Cardiac septum (tissue), 1 donor: ENCODE measurements at regions of chr3 and their contacts with region 1.

Region 1: GRCh38 chr3:109023656-109024254 is 70.1 kb upstream of the GUCA1C start:
- DNase-seq: no peak

Region 2: DNA sequence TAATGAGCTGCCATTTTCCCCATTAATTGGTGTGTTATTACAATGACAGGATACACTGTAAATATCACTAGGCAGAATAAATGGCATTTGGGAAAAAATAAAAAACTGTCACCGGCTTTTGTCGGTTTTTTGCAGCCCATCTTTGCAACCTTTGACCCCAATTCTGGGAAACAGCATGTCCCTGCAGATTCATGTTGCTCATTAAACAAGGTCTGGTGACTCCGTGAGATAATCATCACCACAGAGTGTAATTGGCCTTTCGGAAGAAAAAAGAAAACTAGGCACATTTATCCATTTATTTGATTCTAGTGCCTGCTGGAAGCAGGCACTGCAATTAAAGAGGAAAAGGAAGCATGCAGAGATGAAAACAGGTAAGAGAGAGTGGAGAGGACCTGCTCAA is 136.6 kb before region 1 on chr3:
- intact Hi-C with region 1: no loop called
- DNase-seq: no peak

Region 3: DNA sequence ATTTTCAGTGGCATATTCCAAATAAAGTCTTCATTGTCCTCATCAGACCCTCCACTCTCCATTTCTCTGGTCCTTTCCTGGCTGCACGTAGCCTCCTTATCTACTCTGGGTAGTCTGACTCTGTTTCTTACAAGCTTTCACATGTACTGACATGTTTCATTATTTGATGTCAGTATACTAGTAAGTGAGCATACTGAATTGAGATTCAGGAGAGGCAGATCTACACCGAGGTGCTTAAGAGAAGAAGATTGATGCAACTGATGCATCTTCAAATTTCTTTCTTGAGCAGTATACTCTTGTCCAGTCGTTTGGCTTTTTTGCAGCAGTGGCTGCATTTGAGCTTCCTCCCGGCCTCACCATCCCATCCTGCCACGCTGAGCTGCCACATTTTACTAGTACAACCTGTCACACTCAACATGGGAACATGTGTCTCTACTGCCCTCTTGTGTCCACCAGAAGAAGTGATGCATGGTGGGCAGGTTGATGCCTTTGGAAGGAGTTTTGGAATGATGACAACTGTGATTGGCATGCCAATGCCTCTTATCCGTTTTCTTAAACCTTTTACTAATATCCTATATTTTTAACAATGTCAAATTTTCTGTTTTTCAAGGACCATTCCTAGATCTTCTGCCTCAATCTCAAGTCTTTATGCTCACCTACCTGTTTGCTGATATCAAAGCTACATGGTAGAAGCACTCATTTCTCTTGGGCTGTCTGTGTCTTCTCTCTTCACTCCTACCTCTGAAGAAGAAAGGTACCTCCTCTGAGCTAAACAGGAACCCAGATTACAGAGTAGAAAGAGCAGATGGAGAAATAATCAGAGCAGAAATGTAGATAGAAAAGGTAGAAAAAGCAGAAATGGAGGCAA is 108.7 kb before region 1 on chr3:
- intact Hi-C with region 1: no loop called
- DNase-seq: no peak

Region 4: DNA sequence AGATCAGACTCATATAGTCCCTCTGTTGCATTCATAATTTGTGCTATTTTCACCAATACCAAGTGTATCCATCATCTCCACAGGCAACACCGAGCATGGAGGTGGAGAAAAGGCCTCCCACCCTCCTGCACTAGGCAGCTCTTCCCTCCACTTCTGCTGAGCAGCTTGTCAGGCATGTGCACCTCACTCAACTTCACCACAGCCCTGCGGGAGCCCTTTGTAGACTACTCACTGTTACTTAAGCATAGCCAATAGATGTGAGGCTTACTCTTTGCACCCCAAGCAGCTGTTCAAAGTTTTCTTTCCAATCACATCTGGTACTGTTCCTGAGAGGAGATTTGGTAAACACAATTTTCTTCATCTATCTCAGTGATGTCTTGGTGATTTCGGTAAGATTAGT is 53.2 kb before region 1 on chr3:
- intact Hi-C with region 1: no loop called
- DNase-seq: no peak

Region 5: GRCh38 chr3:109071350-109072142 is 47.8 kb after region 1 on chr3:
- intact Hi-C with region 1: loop called (anchors 10 kb)
- DNase-seq: no peak

Region 6: GRCh38 chr3:109284071-109284470 is 260.3 kb after region 1 on chr3:
- intact Hi-C with region 1: no loop called
- DNase-seq: no peak